ENCODE measurements at regions of chr6 and their contacts with region 1.

Region 1: DNA sequence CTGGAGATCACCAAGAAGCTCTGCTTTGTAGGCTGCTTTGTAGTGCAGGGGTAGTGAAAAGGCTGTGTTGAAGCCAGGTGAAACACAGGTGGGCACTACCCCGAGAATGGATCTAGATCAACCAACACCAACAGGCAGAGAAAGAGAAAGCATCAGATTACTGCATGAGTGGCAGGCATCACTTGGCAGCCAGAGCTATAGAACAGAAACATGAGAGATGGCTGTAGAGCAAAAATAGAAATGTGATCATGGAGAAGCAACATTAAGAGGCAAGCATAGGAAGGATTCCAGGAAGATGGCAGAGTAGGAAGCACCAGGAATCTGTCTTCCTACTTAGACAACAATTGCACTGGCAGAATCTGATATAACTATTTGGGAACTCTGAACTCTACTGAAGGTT is 311.1 kb upstream of the TCF21 start:
- DNase-seq: no peak
- H3K4me3 ChIP-seq: no peak overlapping the region
- H3K27ac ChIP-seq: no peak overlapping the region
- H3K4me1 ChIP-seq: peaks cover 9% of the 10 kb centered on the region
- H3K27me3 ChIP-seq: no peaks in the 10 kb centered on the region

Region 2: GRCh38 chr6:133837801-133838349 is 260.0 kb after region 1 on chr6:
- in situ Hi-C with region 1: loop called (anchors 10 kb)
- DNase-seq: peak; percentile 61
- H3K4me3 ChIP-seq: peak overlapping the region; percentile 78
- H3K27ac ChIP-seq: no peak overlapping the region
- H3K4me1 ChIP-seq: no peaks in the 10 kb centered on the region
- H3K27me3 ChIP-seq: no peaks in the 10 kb centered on the region